T-cell (primary cell): ENCODE measurements at regions of chr5 and their contacts with region 1.

Region 1: DNA sequence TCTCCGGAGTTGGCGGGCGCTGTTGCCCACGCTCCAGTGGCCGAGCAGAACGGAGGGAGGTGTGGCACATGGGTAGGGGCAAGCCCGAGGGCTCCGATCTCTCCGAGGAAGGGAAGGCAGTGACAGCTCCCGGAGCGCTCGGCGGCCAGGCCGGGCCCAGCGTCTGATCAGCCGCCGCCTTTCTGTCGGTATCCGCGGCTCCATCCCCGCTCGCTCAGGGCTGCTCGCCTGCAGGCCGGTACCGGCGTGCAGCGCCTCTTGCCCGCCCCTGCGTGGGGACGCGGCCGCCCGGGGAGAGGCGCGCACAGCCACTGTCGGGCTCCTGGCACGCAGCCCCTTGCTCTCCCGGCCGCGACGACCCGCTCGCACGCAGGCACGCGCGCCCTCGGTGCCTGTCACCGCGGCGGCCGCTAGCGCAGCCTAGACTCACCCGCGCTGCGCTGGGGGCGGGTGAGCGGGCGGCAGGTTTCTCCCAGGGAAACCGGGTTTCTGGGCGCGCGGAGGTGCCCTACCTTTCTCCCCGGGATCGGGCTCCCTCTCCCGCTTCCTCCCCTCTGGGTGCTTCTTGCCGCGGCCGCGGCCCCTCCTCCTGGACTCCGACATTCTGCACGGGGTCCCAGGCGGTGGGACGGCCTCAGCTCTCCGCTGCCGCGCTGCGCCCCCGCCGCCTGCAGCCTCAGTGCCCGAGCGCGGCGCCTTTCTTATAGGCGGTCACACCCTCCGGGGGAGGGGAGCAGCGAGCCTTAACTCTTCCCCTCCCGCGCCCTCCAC is 108.4 kb downstream of the PSD2 start:
- DNase-seq: peak in 3 of 35 experiments; percentile 5 to 12 (median 8)
- ATAC-seq: peak; percentile 32 to 60 (median 42)
- H3K4me3 ChIP-seq: peak overlapping the region; percentile 10 to 18
- H3K4me3 Mint-ChIP-seq: peak overlapping the region; percentile 42 to 59 (median 53)
- H3K27ac ChIP-seq: no peak overlapping the region
- H3K27ac Mint-ChIP-seq: no peak overlapping the region
- H3K4me1 ChIP-seq: peaks cover 0 to 14% of the 10 kb centered on the region in 2 experiments
- H3K4me1 Mint-ChIP-seq: peaks cover 5 to 6% (median 6%) of the 10 kb centered on the region in 3 donors
- H3K27me3 ChIP-seq: peaks cover 10 to 61% of the 10 kb centered on the region in 2 experiments
- H3K27me3 Mint-ChIP-seq: peaks cover 31 to 36% of the 10 kb centered on the region in 2 donors

Region 2: DNA sequence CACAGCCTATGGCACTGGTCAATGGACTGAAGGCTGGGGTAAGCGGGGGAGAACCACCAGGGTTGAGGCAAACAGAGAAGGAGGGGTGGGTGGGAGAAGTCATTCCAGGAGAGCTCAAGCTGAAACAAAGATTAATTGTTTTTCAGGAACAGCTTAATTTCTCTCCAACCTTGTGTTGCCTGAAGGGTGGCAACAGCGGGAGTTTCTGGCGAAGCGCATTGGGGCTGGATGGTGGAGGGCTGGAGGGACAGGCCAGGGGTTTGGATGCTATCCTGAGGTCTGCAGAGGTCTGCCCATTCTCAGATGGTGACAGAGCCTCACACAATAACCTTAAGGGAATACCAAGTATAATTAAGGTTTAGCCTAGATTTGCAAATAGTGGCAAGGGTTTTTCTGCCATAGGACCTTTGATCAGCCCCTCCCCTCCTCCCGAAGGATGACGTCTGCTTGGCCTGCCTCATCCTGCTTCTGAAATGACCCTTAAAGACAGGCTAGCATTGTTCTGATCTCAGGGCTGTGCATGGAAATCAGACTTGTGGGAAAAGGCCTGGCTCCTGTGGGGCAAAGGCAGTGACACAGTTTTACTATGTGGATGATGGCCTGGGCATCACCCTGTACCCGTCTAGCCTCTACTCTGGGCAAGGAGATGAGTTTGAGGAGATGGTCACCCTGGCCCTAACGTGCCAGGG is 75.6 kb before region 1 on chr5:
- CTCF ChIA-PET with region 1: no interaction called
- POLR2A ChIA-PET with region 1: no interaction called
- DNase-seq: no peak
- ATAC-seq: no peak
- H3K4me3 ChIP-seq: no peak overlapping the region
- H3K4me3 Mint-ChIP-seq: no peak overlapping the region
- H3K27ac ChIP-seq: no peak overlapping the region
- H3K27ac Mint-ChIP-seq: no peak overlapping the region
- H3K4me1 ChIP-seq: no peaks in the 10 kb centered on the region
- H3K4me1 Mint-ChIP-seq: no peaks in the 10 kb centered on the region
- H3K27me3 ChIP-seq: peaks cover 3 to 25% of the 10 kb centered on the region in 2 experiments
- H3K27me3 Mint-ChIP-seq: peaks cover 7 to 13% of the 10 kb centered on the region in 2 donors

Region 3: DNA sequence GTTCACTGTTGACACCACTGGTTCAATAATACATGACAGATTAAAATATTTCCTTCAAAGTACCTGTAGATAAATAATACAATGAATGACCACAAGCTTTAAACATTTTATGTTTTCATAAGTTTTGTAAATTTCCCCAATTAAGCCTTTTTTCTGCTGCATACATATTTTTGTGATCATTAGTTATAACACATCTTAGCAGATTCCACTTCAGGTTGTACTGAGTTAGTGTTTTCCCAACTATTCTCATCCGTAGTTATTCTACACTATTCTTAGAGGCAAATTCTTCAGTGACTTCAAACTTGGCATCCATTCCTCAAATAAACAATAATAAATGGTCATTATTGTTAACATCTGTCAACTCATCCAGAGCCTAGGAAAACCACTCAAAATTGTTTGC is 38.3 kb after region 1 on chr5:
- CTCF ChIA-PET with region 1: interaction called in 1 of 2 experiments, 14 read pairs
- POLR2A ChIA-PET with region 1: no interaction called
- DNase-seq: no peak
- ATAC-seq: no peak
- H3K4me3 ChIP-seq: no peak overlapping the region
- H3K4me3 Mint-ChIP-seq: no peak overlapping the region
- H3K27ac ChIP-seq: no peak overlapping the region
- H3K27ac Mint-ChIP-seq: no peak overlapping the region
- H3K4me1 ChIP-seq: no peaks in the 10 kb centered on the region
- H3K4me1 Mint-ChIP-seq: no peaks in the 10 kb centered on the region
- H3K27me3 ChIP-seq: peaks cover 0 to 7% of the 10 kb centered on the region in 2 experiments
- H3K27me3 Mint-ChIP-seq: peaks cover 34 to 42% of the 10 kb centered on the region in 2 donors